Calu3 (cell line): ENCODE measurements at regions of chr15 and their contacts with region 1.

Region 1: DNA sequence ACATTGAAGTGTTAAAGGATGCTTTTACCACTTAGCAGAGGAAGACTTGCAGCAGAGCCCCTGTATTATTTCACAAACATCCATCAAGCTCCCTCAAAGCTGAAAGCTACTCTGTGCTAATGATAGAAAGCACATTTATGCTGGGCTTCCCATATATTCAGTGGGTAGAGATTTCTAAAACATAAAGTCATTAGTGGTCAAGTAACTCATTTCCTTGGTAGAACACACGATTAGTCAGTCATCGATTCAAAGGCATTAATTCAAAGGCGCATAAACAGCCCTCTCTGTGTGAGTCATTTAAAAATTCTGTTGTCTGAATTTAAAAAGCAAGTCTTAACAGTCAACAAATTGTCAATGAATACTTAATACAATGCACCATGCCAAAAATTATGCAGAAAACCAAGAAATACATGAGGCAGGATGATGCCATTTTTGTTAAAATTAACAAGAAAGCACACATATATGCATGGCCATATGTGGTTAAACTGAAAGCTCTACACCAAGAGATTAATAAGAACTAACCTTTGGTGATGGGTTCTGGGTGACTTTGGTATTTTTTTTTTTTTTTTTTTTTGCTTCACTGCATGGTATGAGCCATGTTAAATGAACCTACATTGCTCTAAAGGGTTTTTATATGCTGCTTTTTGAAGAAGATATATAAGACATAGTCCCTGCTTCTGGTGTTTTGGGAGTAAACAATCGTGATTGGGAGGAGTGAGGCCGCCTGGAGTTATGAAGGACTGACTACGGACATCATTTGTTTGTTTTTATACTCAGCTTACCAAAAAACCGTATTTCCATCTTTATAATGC is 61.7 kb downstream of the LDHAL6B start:
- DNase-seq: no peak
- H3K4me3 Mint-ChIP-seq: peak overlapping the region; percentile 37
- H3K27ac Mint-ChIP-seq: peak overlapping the region; percentile 90
- H3K4me1 Mint-ChIP-seq: peaks cover 65% of the 10 kb centered on the region
- H3K27me3 Mint-ChIP-seq: no peaks in the 10 kb centered on the region
- CTCF ChIP-seq: no peak

Region 2: DNA sequence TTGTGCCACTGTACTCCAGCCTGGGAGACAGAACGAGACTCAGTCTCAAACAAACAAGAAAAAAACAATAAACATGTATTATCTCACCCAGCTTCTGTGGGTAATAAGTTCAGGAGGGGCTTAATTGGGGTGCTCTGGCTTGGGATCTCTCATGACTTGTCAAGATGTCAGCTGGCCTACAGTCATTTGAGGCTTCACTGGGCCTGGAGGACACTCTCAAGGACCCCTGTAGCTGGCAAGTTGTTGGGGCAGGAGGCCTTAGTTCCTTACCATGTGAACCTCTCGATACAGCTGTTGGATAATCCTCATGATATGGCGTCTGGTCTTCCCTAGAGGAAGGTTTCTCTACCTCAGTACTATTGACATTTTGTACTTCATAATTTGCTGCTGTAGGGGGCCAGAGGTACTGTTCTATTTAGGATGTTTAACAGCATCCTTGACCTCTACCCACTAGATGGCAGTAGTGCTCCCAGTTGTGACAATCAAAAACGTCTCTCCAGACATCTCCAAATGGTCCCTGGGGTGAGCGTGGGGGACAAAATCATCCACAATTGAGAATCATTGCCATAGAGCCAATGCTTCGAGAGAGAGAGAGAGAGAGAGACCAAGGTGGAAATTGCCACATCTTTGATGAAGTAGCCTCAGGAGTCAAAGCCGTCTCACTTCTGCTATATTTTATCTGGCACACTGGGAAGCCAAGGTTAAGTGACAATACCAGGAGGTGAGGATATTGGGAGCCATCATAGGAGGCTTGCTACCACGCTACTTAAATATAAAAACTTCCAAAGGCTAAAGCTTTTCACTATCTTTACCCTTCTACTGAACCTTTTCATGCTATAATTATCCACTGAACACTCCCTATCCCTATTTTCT is 311.0 kb before region 1 on chr15:
- CTCF ChIA-PET with region 1: no interaction called
- intact Hi-C with region 1: no loop called
- DNase-seq: peak; percentile 81
- H3K4me3 Mint-ChIP-seq: no peak overlapping the region
- H3K27ac Mint-ChIP-seq: no peak overlapping the region
- H3K4me1 Mint-ChIP-seq: peaks cover 19% of the 10 kb centered on the region
- H3K27me3 Mint-ChIP-seq: no peaks in the 10 kb centered on the region
- CTCF ChIP-seq: peak; percentile 83

Region 3: GRCh38 chr15:59306520-59307164 is 38.3 kb after region 1 on chr15:
- CTCF ChIA-PET with region 1: interaction called, 8 read pairs
- intact Hi-C with region 1: loop called (anchors 5 kb)
- DNase-seq: no peak
- H3K4me3 Mint-ChIP-seq: peak overlapping the region; percentile 15
- H3K27ac Mint-ChIP-seq: peak overlapping the region; percentile 92
- H3K4me1 Mint-ChIP-seq: peaks cover 83% of the 10 kb centered on the region
- H3K27me3 Mint-ChIP-seq: no peaks in the 10 kb centered on the region
- CTCF ChIP-seq: no peak